Naive thymus-derived CD8-positive, alpha-beta T cell (primary cell): ENCODE measurements at regions of chr6 and their contacts with region 1.

Region 1: DNA sequence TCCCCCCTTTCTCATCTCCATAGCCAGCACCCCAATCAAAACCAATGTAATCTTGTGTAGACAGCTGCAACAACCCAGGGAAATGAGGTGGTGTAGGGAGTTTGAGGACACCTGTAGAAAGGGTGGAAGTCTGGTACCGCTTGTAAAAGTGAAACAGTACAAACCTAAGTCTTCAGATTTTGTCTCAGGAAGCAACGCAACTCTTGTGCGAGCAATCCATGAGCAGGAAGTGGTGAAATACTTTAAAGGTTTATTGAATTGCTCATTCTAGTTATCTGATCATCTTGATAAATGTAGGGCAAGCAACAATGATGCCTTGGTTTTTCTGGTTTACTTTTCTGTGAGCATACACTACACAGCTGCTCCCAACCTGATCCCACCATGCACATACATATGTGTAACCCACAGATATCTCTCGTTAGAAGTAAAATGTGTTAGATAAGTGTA is 71.1 kb upstream of the THEMIS start:
- DNase-seq: peak in 9 of 10 donors; percentile 33 to 87 (median 76)
- ATAC-seq: peak; percentile 83 to 85
- H3K4me3 Mint-ChIP-seq: peak overlapping the region; percentile 77 to 92 (median 90)
- H3K27ac Mint-ChIP-seq: peak overlapping the region; percentile 95 to 99 (median 98)
- H3K4me1 Mint-ChIP-seq: peaks cover 38 to 80% (median 73%) of the 10 kb centered on the region in 4 donors
- H3K27me3 Mint-ChIP-seq: no peaks in the 10 kb centered on the region

Region 2: GRCh38 chr6:127868338-127868737 is 103.6 kb before region 1 on chr6:
- POLR2A ChIA-PET with region 1: no interaction called
- DNase-seq: no peak
- ATAC-seq: no peak
- H3K4me3 Mint-ChIP-seq: peak overlapping the region in 8 of 10 donors; percentile 0 to 61 (median 34)
- H3K27ac Mint-ChIP-seq: peak overlapping the region; percentile 6 to 91 (median 80)
- H3K4me1 Mint-ChIP-seq: peaks cover 44 to 75% (median 70%) of the 10 kb centered on the region in 4 donors
- H3K27me3 Mint-ChIP-seq: no peaks in the 10 kb centered on the region

Region 3: DNA sequence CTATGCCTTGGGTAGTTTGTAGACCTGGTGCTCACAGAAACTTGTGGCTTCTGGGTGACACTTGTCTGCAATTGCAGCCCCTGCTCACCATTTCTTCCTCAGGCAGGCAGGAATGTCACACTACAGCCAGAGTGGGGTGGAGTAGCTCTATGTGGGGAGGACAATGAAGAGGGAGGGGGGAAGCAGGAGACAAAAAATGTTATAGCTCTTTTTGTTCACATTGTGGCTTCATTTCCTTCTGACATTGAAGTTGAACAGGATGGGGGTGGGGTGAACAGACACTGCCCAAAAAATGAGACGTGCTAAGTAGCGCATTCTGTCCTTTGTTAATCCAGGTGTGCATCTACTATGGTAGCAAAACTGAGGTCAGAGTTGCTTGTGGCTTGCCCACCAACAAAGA is 71.0 kb before region 1 on chr6 and contains the start of gene THEMIS:
- POLR2A ChIA-PET with region 1: interaction called, 11 read pairs
- DNase-seq: peak in 9 of 10 donors; percentile 32 to 82 (median 72)
- ATAC-seq: peak; percentile 78 to 87
- H3K4me3 Mint-ChIP-seq: peak within 1 kb of the TSS; percentile 96 to 100 (median 98)
- H3K27ac Mint-ChIP-seq: peak within 1 kb of the TSS; percentile 93 to 99 (median 95)
- H3K4me1 Mint-ChIP-seq: peaks cover 27 to 65% (median 44%) of the 10 kb centered on the region in 4 donors
- H3K27me3 Mint-ChIP-seq: no peaks in the 10 kb centered on the region
- polyA plus RNA-seq, gene THEMIS: 168 to 212 (median 183) TPM

Region 4: GRCh38 chr6:127951172-127951917 is 20.6 kb before region 1 on chr6:
- POLR2A ChIA-PET with region 1: interaction called, 47 read pairs
- DNase-seq: peak in 3 of 10 donors; percentile 62 to 79 (median 78)
- ATAC-seq: peak; percentile 81 to 90
- H3K4me3 Mint-ChIP-seq: peak overlapping the region; percentile 63 to 86 (median 79)
- H3K27ac Mint-ChIP-seq: peak overlapping the region; percentile 87 to 98 (median 92)
- H3K4me1 Mint-ChIP-seq: peaks cover 31 to 91% (median 70%) of the 10 kb centered on the region in 4 donors
- H3K27me3 Mint-ChIP-seq: no peaks in the 10 kb centered on the region

Region 5: DNA sequence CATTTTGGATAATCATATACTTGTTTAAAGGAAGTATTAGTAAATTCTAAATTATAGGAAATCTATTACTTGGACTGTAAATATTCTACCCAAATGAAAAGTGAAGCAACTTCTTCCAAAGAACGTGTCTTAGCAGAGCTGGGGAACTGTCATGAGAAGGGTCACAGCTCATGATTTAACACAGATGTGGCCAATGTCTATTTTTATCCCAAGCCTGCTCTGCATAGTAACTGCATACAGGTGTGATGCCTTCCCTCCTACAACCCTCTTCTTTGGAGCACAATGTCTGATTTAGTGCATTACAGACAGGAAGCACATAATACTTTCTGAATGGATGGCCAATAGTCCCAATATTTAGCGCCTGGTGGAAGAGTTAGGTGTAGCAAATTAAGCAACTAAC is 67.6 kb after region 1 on chr6:
- POLR2A ChIA-PET with region 1: no interaction called
- DNase-seq: no peak
- ATAC-seq: no peak
- H3K4me3 Mint-ChIP-seq: no peak overlapping the region
- H3K27ac Mint-ChIP-seq: peak overlapping the region in 1 of 10 donors; percentile 53
- H3K4me1 Mint-ChIP-seq: peaks cover 17 to 50% (median 28%) of the 10 kb centered on the region in 4 donors
- H3K27me3 Mint-ChIP-seq: no peaks in the 10 kb centered on the region

Region 6: DNA sequence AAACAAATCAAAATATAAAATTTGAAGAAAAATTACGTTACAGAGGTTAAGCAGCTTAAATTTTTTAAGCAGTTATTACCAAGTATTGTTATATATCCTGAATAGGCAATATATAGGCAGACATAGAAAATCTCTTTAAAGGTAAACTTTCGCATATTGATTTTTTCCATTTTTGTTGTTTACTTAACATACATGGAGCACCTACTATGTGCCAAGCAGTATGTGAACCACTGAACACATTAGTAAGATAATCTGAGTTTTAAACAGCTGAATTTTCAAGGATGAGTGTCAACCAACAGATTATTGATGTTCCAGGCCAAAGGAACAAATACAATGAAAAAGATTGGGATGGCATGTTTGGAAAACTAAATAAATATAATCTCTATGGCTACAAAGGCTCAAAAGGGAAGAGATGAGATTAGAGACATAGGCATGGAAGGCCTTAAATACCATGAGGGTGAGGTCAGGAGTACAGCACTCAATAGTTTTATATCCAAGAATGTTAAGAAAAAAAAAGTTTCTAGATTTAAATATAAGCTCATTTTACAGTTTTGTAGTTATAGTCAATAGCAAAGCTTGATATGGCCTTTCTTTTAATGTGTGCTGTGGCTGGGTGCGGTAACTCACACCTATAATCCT is 270.9 kb after region 1 on chr6:
- POLR2A ChIA-PET with region 1: interaction called, 11 read pairs
- DNase-seq: no peak
- ATAC-seq: no peak
- H3K4me3 Mint-ChIP-seq: no peak overlapping the region
- H3K27ac Mint-ChIP-seq: no peak overlapping the region
- H3K4me1 Mint-ChIP-seq: peaks cover 13 to 28% (median 23%) of the 10 kb centered on the region in 4 donors
- H3K27me3 Mint-ChIP-seq: no peaks in the 10 kb centered on the region